ENCODE measurements at regions of chr11 and their contacts with region 1.

Region 1: GRCh38 chr11:57741132-57742086 is at the start of gene SELENOH:
- DNase-seq: peak; percentile 93
- H3K4me3 Mint-ChIP-seq: peak within 1 kb of the TSS; percentile 98
- H3K27ac Mint-ChIP-seq: peak within 1 kb of the TSS; percentile 95
- H3K4me1 Mint-ChIP-seq: peaks cover 46% of the 10 kb centered on the region
- H3K27me3 Mint-ChIP-seq: no peaks in the 10 kb centered on the region
- total RNA-seq, gene SELENOH: 211 and 232 TPM in 2 replicates

Region 2: GRCh38 chr11:57237204-57237681 is 504.2 kb before region 1 on chr11 and contains the start of gene APLNR:
- intact Hi-C with region 1: no loop called
- DNase-seq: no peak
- H3K4me3 Mint-ChIP-seq: no peak within 1 kb of the TSS
- H3K27ac Mint-ChIP-seq: no peak within 1 kb of the TSS
- H3K4me1 Mint-ChIP-seq: no peaks in the 10 kb centered on the region
- H3K27me3 Mint-ChIP-seq: peaks cover 16% of the 10 kb centered on the region
- total RNA-seq, gene APLNR: not detected in 2 replicates

Region 3: GRCh38 chr11:57426929-57427726 is 314.3 kb before region 1 on chr11 and contains the start of gene SLC43A3:
- intact Hi-C with region 1: loop called (anchors 1 kb)
- DNase-seq: peak; percentile 60
- H3K4me3 Mint-ChIP-seq: peak within 1 kb of the TSS; percentile 90
- H3K27ac Mint-ChIP-seq: peak within 1 kb of the TSS; percentile 80
- H3K4me1 Mint-ChIP-seq: peaks cover 56% of the 10 kb centered on the region
- H3K27me3 Mint-ChIP-seq: peaks cover 3% of the 10 kb centered on the region
- total RNA-seq, gene SLC43A3: 181 and 184 TPM in 2 replicates

Region 4: DNA sequence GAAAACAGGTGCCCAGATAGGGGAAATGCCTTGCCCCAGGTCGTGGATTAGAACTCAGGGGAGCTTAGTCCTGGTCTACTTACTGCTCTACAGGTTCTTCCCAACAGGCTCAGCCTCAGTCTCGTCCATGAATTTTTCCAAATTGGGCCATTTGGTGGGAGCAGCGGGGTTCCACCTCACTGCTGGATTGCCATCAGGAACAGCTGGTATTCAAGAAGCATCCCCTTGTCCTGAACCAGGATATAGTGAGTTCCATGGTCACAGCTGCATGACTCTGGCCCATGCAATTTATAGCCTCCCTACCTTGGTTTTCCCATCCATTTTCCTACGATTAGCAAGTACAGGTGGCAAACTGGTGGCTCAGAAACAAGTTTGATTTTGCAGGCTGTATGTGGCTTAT is 167.3 kb before region 1 on chr11:
- intact Hi-C with region 1: no loop called
- DNase-seq: no peak
- H3K4me3 Mint-ChIP-seq: no peak overlapping the region
- H3K27ac Mint-ChIP-seq: no peak overlapping the region
- H3K4me1 Mint-ChIP-seq: no peaks in the 10 kb centered on the region
- H3K27me3 Mint-ChIP-seq: peaks cover 17% of the 10 kb centered on the region

Region 5: DNA sequence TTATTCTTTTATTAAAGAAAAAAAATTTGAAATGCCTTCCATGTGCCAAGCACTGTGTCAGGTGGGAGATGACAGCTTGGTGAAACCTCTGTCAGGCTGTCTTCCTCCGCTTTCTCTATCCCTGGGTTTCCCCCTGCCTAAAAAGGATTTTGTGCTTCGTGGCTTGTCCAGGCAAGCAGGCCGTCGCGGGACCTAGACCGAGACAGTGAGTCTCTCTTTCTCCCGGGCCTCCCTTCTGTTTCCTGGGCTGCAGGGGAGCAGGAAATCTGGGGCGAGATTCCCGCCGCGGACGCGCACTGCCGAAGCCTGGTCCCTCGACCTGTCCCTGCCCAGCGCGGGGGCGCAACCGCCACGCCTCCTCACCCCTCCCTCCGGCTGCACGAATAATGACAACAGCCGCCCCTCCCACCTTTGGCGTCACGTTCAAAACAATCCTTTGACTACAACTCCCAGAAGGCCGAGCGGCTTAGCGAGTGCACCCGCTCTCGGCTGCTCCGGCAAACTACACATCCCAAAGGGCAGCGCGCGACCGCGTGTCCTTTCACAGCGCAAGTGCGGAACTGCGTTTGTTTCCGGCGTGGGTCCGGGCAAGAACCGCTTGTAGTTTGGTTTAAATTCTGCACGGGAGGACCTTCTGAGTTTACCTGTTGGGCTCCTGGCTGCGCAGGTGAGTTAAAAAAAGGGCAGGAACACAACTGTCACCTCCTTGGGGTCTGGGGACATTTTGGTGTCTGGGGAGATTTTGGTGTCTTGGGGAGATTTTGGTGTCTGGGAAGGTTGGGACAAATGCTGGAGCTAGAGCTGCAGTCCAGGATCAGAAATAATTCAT is 84.0 kb before region 1 on chr11 and contains the start of gene CLP1:
- intact Hi-C with region 1: loop called (anchors 1 kb)
- DNase-seq: peak; percentile 99
- H3K4me3 Mint-ChIP-seq: peak within 1 kb of the TSS; percentile 96
- H3K27ac Mint-ChIP-seq: peak within 1 kb of the TSS; percentile 95
- H3K4me1 Mint-ChIP-seq: peaks cover 18% of the 10 kb centered on the region
- H3K27me3 Mint-ChIP-seq: no peaks in the 10 kb centered on the region
- total RNA-seq, gene CLP1: 17.8 and 19.1 TPM in 2 replicates

Region 6: DNA sequence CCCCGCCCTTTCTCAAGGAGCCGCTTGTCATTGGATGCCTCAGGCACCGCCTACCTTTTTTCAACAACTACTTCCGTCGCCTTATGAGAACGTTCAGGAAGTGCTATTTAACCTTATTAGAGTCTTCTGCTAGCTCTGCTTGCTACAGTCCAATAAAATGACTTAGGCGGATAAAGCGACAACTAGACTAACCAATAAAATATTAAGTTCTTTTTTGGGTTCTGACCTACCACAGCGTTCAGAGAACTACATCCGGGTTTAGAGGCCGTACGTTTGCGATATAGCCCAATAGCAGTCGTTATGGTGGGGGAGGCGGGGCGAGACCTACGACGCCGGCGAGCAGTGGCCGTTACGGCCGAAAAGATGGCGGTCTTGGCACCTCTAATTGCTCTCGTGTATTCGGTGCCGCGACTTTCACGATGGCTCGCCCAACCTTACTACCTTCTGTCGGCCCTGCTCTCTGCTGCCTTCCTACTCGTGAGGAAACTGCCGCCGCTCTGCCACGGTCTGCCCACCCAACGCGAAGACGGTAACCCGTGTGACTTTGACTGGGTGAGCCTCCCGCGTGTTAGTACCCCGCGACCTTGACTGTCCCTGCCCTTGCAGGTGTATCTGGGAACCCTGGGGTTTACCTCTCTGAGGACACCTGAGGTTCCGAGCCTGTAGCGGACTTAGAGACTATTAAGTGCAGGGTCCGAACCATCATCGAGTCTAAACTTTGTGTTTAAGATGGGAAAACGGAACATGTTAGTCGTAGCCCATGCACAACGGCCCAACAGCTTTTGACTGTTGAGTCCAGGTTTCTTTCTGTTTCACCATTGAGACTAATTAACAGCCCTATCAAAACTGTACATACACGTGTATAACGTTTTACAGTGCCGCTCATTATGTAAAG is 28.9 kb before region 1 on chr11 and contains the start of gene TMX2:
- intact Hi-C with region 1: loop called (anchors 1 kb)
- DNase-seq: peak; percentile 88
- H3K4me3 Mint-ChIP-seq: peak within 1 kb of the TSS; percentile 97
- H3K27ac Mint-ChIP-seq: peak within 1 kb of the TSS; percentile 94
- H3K4me1 Mint-ChIP-seq: peaks cover 53% of the 10 kb centered on the region
- H3K27me3 Mint-ChIP-seq: no peaks in the 10 kb centered on the region
- total RNA-seq, gene TMX2: 95.9 and 96.8 TPM in 2 replicates

Region 7: GRCh38 chr11:57792060-57792541 is 50.7 kb after region 1 on chr11:
- intact Hi-C with region 1: loop called (anchors 1 kb)
- DNase-seq: peak; percentile 84
- H3K4me3 Mint-ChIP-seq: peak overlapping the region; percentile 53
- H3K27ac Mint-ChIP-seq: peak overlapping the region; percentile 86
- H3K4me1 Mint-ChIP-seq: peaks cover 50% of the 10 kb centered on the region
- H3K27me3 Mint-ChIP-seq: peaks cover 1% of the 10 kb centered on the region

Region 8: GRCh38 chr11:58524232-58525036 is 783.0 kb after region 1 on chr11:
- intact Hi-C with region 1: loop called (anchors 1 kb)
- DNase-seq: no peak
- H3K4me3 Mint-ChIP-seq: peak overlapping the region; percentile 74
- H3K27ac Mint-ChIP-seq: peak overlapping the region; percentile 77
- H3K4me1 Mint-ChIP-seq: peaks cover 36% of the 10 kb centered on the region
- H3K27me3 Mint-ChIP-seq: no peaks in the 10 kb centered on the region

Region 9: GRCh38 chr11:59668950-59669610 is 1927.7 kb after region 1 on chr11 and contains the start of gene PATL1:
- intact Hi-C with region 1: loop called (anchors 2 kb)
- DNase-seq: peak; percentile 98
- H3K4me3 Mint-ChIP-seq: peak within 1 kb of the TSS; percentile 94
- H3K27ac Mint-ChIP-seq: peak within 1 kb of the TSS; percentile 97
- H3K4me1 Mint-ChIP-seq: peaks cover 46% of the 10 kb centered on the region
- H3K27me3 Mint-ChIP-seq: peaks cover 2% of the 10 kb centered on the region
- total RNA-seq, gene PATL1: 68.7 and 74.0 TPM in 2 replicates

Measured in activated T-helper 1 cell treated with anti-CD3 and anti-CD28 coated beads, Interleukin-12 subunit alpha, Interleukin-12 subunit beta, Interleukin-2, Interleukin-4 antibody, amounts not matched to agents 30 ng/mL and 10 ng/mL and 1 ng/mL, durations not matched to agents 14 hours and 24 hours and 36 hours (primary cell).